CD8-positive, alpha-beta T cell (primary cell): ENCODE measurements at regions of chr10 and their contacts with region 1.

Region 1: GRCh38 chr10:14837757-14838581 is at the starts of genes CDNF, HSPA14 and MSANTD7:
- DNase-seq: peak; percentile 98 to 100 (median 99)
- ATAC-seq: peak; percentile 95
- H3K4me3 ChIP-seq: peak within 1 kb of the TSS; percentile 90 to 96
- H3K4me3 Mint-ChIP-seq: peak within 1 kb of the TSS; percentile 98
- H3K27ac ChIP-seq: peak within 1 kb of the TSS; percentile 86 to 94
- H3K27ac Mint-ChIP-seq: peak within 1 kb of the TSS; percentile 99
- H3K4me1 ChIP-seq: peaks cover 17% of the 10 kb centered on the region
- H3K4me1 Mint-ChIP-seq: peaks cover 32% of the 10 kb centered on the region
- H3K27me3 ChIP-seq: no peaks in the 10 kb centered on the region
- H3K27me3 Mint-ChIP-seq: no peaks in the 10 kb centered on the region
- CTCF ChIP-seq: no peak
- total RNA-seq, gene CDNF: 2.3 to 2.5 TPM
- total RNA-seq, gene HSPA14: 37.7 to 37.8 TPM
- total RNA-seq, gene MSANTD7: 20.2 to 22.3 TPM

Region 2: DNA sequence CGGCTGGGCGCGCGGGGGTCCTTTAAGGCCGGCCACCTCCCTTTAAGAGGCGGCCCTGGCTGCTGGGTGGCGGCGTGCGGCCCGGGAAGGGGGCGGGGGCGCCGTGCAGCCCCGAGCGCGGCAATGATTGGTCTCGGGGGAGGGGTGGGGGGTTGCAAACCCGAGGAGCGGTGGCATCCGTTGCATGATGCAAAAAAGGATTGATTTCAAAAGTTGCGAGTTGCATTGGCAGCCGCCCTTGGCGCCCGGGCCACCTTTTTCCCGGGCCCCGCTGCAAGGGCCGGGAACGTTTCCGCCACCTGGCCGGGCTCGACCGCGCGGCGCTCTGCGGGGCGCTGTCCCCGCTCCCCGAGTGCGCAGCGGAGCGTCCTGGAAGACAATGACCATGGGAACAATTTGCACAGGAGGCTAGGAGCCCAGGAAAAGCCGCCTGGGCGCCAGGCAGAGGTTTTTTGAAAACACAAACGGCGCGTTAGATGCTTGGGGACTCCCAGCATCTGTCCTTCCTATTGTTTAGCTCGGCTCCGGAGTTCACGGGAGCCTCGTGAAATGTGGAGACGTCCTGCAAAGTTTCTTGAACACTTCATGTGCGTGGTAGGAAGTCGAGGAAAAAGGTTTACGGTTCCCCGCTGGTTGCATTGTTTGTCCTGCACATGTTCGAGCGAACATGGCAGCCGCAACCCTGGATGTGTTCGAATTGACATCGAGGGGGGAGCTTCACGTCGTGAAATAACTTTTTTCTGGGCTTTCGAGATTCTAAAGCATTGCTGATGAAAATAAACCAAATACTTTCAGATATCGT is 1489.6 kb before region 1 on chr10 and contains the start of gene SEPHS1:
- CTCF ChIA-PET with region 1: no interaction called
- POLR2A ChIA-PET with region 1: no interaction called
- intact Hi-C with region 1: loop called in 1 of 2 experiments (anchors 5 kb)
- DNase-seq: peak; percentile 51 to 89 (median 79)
- ATAC-seq: peak; percentile 67
- H3K4me3 ChIP-seq: peak within 1 kb of the TSS; percentile 83 to 93
- H3K4me3 Mint-ChIP-seq: peak within 1 kb of the TSS; percentile 96
- H3K27ac ChIP-seq: peak within 1 kb of the TSS; percentile 65 to 82
- H3K27ac Mint-ChIP-seq: peak within 1 kb of the TSS; percentile 94
- H3K4me1 ChIP-seq: peaks cover 48% of the 10 kb centered on the region
- H3K4me1 Mint-ChIP-seq: peaks cover 61% of the 10 kb centered on the region
- H3K27me3 ChIP-seq: no peaks in the 10 kb centered on the region
- H3K27me3 Mint-ChIP-seq: no peaks in the 10 kb centered on the region
- CTCF ChIP-seq: no peak
- total RNA-seq, gene SEPHS1: 16.9 to 19.2 TPM

Region 3: GRCh38 chr10:14543046-14543903 is 294.7 kb before region 1 on chr10:
- CTCF ChIA-PET with region 1: interaction called, 7 read pairs
- POLR2A ChIA-PET with region 1: interaction called, 6 read pairs
- intact Hi-C with region 1: loop called in 1 of 2 experiments (anchors 5 kb)
- DNase-seq: peak in 6 of 9 experiments; percentile 47 to 82 (median 66)
- ATAC-seq: peak; percentile 84
- H3K4me3 ChIP-seq: peak overlapping the region; percentile 4 to 35
- H3K4me3 Mint-ChIP-seq: peak overlapping the region; percentile 75
- H3K27ac ChIP-seq: peak overlapping the region; percentile 68
- H3K27ac Mint-ChIP-seq: peak overlapping the region; percentile 95
- H3K4me1 ChIP-seq: peaks cover 62% of the 10 kb centered on the region
- H3K4me1 Mint-ChIP-seq: peaks cover 89% of the 10 kb centered on the region
- H3K27me3 ChIP-seq: no peaks in the 10 kb centered on the region
- H3K27me3 Mint-ChIP-seq: no peaks in the 10 kb centered on the region
- CTCF ChIP-seq: peak; percentile 76

Region 4: DNA sequence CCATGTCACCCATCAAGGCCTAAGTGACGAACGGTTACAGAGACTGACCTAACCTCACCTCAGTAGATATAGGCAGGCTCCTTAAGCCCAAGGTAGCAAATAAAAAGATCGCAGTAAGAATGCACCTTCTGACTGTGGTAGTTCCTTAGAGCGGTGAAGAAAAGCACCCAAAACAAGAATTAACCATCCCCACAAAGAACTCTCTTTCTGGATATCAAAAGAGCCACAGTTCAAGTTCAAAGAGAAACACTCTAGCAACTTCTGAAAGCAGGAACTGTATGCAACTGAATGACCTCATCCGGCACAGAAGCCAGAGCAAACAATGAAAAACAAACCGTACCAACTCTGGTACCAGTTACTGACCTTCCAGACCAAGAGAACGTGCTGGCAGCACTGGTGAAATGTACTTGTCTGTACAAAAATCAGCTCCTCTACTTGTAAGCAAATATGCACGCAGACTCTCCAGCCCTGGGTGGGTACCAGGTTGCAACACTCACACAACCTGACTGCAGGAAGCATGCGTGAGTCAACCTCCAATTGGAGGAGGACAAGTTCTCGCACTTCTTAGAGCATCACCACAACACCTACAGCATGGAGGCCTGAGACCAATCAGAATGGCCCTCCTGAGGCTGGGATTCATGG is 266.0 kb before region 1 on chr10:
- CTCF ChIA-PET with region 1: interaction called, 3 read pairs
- POLR2A ChIA-PET with region 1: interaction called, 10 read pairs
- intact Hi-C with region 1: loop called in 1 of 2 experiments (anchors 5 kb)
- DNase-seq: peak; percentile 46 to 91 (median 68)
- ATAC-seq: peak; percentile 66
- H3K4me3 ChIP-seq: peak overlapping the region; percentile 58 to 65
- H3K4me3 Mint-ChIP-seq: peak overlapping the region; percentile 88
- H3K27ac ChIP-seq: peak overlapping the region; percentile 82 to 89
- H3K27ac Mint-ChIP-seq: peak overlapping the region; percentile 97
- H3K4me1 ChIP-seq: peaks cover 66% of the 10 kb centered on the region
- H3K4me1 Mint-ChIP-seq: peaks cover 89% of the 10 kb centered on the region
- H3K27me3 ChIP-seq: no peaks in the 10 kb centered on the region
- H3K27me3 Mint-ChIP-seq: no peaks in the 10 kb centered on the region
- CTCF ChIP-seq: no peak

Region 5: GRCh38 chr10:14712991-14713497 is 124.9 kb before region 1 on chr10:
- CTCF ChIA-PET with region 1: no interaction called
- POLR2A ChIA-PET with region 1: no interaction called
- intact Hi-C with region 1: no loop called
- DNase-seq: no peak
- ATAC-seq: no peak
- H3K4me3 ChIP-seq: no peak overlapping the region
- H3K4me3 Mint-ChIP-seq: no peak overlapping the region
- H3K27ac ChIP-seq: no peak overlapping the region
- H3K27ac Mint-ChIP-seq: no peak overlapping the region
- H3K4me1 ChIP-seq: no peaks in the 10 kb centered on the region
- H3K4me1 Mint-ChIP-seq: no peaks in the 10 kb centered on the region
- H3K27me3 ChIP-seq: no peaks in the 10 kb centered on the region
- H3K27me3 Mint-ChIP-seq: no peaks in the 10 kb centered on the region
- CTCF ChIP-seq: no peak

Region 6: DNA sequence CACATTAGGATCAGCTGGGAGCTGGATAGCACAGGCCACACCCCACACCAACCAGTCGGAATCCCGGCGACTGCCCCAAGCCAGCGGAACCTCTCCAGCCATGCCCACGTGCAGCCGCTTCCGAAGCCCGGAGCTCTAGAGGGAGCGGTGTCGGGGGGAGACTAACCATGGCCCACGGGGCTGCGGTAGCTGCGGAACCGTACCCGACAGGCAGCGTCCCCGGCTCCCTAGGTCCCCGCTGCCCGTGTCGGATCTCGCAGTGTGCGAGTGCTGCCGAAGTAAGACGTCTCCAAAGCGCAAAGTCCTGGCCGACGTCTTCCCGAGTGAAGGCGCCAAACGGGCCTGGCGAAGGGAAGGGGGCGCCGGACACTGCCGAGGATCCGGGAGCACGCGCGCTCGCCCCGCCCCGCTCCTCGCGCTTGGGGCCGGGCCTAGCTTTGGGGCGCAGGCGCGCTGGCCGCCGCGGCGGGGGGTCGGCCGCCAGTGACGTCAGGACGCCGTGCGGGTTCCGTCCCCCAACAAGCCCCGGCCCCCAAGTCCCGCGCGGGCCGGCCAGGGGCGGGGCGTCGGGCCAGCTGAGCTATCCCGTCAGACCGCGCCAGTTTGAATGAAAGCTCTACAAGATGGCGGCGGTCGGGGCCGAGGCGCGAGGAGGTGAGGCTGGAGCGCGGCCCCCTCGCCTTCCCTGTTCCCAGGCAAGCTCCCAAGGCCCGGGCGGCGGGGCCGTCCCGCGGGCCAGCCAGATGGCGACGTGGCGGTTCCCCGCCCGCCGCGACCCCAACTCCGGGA is 40.5 kb after region 1 on chr10 and contains the start of gene SUV39H2:
- CTCF ChIA-PET with region 1: interaction called, 4 read pairs
- POLR2A ChIA-PET with region 1: interaction called, 37 read pairs
- intact Hi-C with region 1: loop called (anchors 1 kb)
- DNase-seq: peak; percentile 78 to 96 (median 92)
- ATAC-seq: peak; percentile 80
- H3K4me3 ChIP-seq: peak within 1 kb of the TSS; percentile 92 to 94
- H3K4me3 Mint-ChIP-seq: peak within 1 kb of the TSS; percentile 96
- H3K27ac ChIP-seq: peak within 1 kb of the TSS; percentile 67 to 69
- H3K27ac Mint-ChIP-seq: peak within 1 kb of the TSS; percentile 79
- H3K4me1 ChIP-seq: peaks cover 26% of the 10 kb centered on the region
- H3K4me1 Mint-ChIP-seq: peaks cover 31% of the 10 kb centered on the region
- H3K27me3 ChIP-seq: no peaks in the 10 kb centered on the region
- H3K27me3 Mint-ChIP-seq: no peaks in the 10 kb centered on the region
- CTCF ChIP-seq: no peak
- total RNA-seq, gene SUV39H2: 2.6 to 3.1 TPM

Region 7: GRCh38 chr10:15106352-15107013 is 268.5 kb after region 1 on chr10:
- CTCF ChIA-PET with region 1: no interaction called
- POLR2A ChIA-PET with region 1: interaction called, 3 read pairs
- intact Hi-C with region 1: loop called in 1 of 2 experiments (anchors 5 kb)
- DNase-seq: peak; percentile 16 to 77 (median 73)
- ATAC-seq: peak; percentile 99
- H3K4me3 ChIP-seq: no peak overlapping the region
- H3K4me3 Mint-ChIP-seq: no peak overlapping the region
- H3K27ac ChIP-seq: no peak overlapping the region
- H3K27ac Mint-ChIP-seq: peak overlapping the region; percentile 22
- H3K4me1 ChIP-seq: peaks cover 4% of the 10 kb centered on the region
- H3K4me1 Mint-ChIP-seq: peaks cover 10% of the 10 kb centered on the region
- H3K27me3 ChIP-seq: no peaks in the 10 kb centered on the region
- H3K27me3 Mint-ChIP-seq: no peaks in the 10 kb centered on the region
- CTCF ChIP-seq: peak; percentile 94